ENCODE measurements at regions of chr17 and their contacts with region 1.

Region 1: GRCh38 chr17:8991514-8992285 is 26.2 kb upstream of the PIK3R5 start:
- DNase-seq: peak; percentile 59
- ATAC-seq: peak; percentile 38 to 86

Region 2: DNA sequence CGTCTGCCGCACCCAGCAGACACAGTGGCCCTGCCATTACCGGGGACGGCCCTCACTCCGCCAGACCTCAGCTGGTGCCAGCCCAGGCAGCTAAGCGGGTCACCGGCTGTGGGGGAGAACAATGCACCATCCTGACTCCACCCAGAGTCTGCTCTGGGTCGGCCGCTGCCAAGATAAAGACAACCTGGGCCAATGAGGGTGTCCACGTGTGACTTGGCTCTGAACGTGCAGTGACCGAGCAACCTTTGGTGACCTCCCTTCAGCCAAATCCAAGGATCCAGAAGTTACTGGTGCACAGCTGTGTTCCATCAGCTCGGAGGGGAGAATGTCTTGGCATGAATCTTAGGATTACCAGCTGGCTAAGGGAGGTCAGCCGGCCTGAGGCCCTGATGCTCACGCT is 185.5 kb after region 1 on chr17:
- intact Hi-C with region 1: loop called in 1 of 2 experiments (anchors 10 kb)
- DNase-seq: peak; percentile 70
- ATAC-seq: peak; percentile 36 to 73

Region 3: GRCh38 chr17:9291912-9292560 is 300.3 kb after region 1 on chr17:
- intact Hi-C with region 1: loop called (anchors 5 to 10 kb)
- DNase-seq: peak; percentile 69
- ATAC-seq: peak; percentile 90 to 96

Region 4: DNA sequence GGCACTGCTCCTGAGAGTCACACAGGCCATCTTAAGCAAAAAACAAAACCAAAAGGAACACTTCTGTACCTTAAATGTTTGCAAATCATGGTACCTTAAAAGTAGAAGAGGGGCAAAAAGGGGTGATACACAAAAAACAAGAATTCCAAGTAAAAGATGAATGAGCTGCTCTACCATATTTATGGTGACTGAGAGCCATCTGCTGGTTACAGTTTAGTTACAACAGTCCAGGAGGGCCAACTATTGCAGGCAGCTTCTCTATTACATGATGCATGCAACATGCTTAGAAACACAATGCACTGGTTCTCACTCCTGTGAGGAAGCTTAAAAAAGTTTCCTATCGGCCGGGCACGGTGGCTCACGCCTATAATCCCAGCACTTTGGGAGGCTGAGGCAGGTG is 530.4 kb after region 1 on chr17:
- intact Hi-C with region 1: loop called in 1 of 2 experiments (anchors 2 kb)
- DNase-seq: no peak
- ATAC-seq: peak; percentile 70 to 75

Measured in left cardiac atrium (tissue), 4 donors.